Activated CD4-positive, alpha-beta memory T cell treated with anti-CD3 and anti-CD28 coated beads, Interleukin-2, amount 10 ng/mL, durations not matched to agents 7 days and 5 days (primary cell): ENCODE measurements at regions of chr4 and their contacts with region 1.

Region 1: GRCh38 chr4:77031544-77031943 is 44.2 kb downstream of the CCNI start:
- DNase-seq: peak; percentile 26
- H3K4me3 Mint-ChIP-seq: no peak overlapping the region
- H3K27ac Mint-ChIP-seq: peak overlapping the region; percentile 5
- H3K4me1 Mint-ChIP-seq: peaks cover 46% of the 10 kb centered on the region
- H3K27me3 Mint-ChIP-seq: peaks cover 3% of the 10 kb centered on the region

Region 2: GRCh38 chr4:76993787-76994641 is 37.5 kb before region 1 on chr4:
- CTCF ChIA-PET with region 1: interaction called, 13 read pairs
- POLR2A ChIA-PET with region 1: interaction called, 12 read pairs
- DNase-seq: peak; percentile 62
- H3K4me3 Mint-ChIP-seq: peak overlapping the region; percentile 11
- H3K27ac Mint-ChIP-seq: peak overlapping the region; percentile 28
- H3K4me1 Mint-ChIP-seq: peaks cover 44% of the 10 kb centered on the region
- H3K27me3 Mint-ChIP-seq: peaks cover 36% of the 10 kb centered on the region